IMR-90 (cell line): ENCODE measurements at regions of chr11 and their contacts with region 1.

Region 1: GRCh38 chr11:103326070-103326794 is 217.0 kb downstream of the DYNC2H1 start:
- DNase-seq: peak; percentile 78
- ATAC-seq: peak; percentile 98
- H3K4me3 ChIP-seq: no peak overlapping the region
- H3K27ac ChIP-seq: peak overlapping the region; percentile 34
- H3K4me1 ChIP-seq: peaks cover 4% of the 10 kb centered on the region
- H3K27me3 ChIP-seq: no peaks in the 10 kb centered on the region
- CTCF ChIP-seq: peak; percentile 91
- POLR2A ChIP-seq: no peak
- RAD21 ChIP-seq: peak; percentile 89

Region 2: GRCh38 chr11:103202048-103202651 is 124.1 kb before region 1 on chr11:
- CTCF ChIA-PET with region 1: no interaction called
- POLR2A ChIA-PET with region 1: no interaction called
- dilution Hi-C with region 1: no loop called
- in situ Hi-C with region 1: no loop called
- intact Hi-C with region 1: loop called (anchors 5 kb)
- DNase-seq: peak; percentile 63
- ATAC-seq: peak; percentile 60
- H3K4me3 ChIP-seq: no peak overlapping the region
- H3K27ac ChIP-seq: no peak overlapping the region
- H3K4me1 ChIP-seq: peaks cover 2% of the 10 kb centered on the region; the same call in 1 of the 2 replicates
- H3K27me3 ChIP-seq: no peaks in the 10 kb centered on the region
- CTCF ChIP-seq: peak; percentile 79
- POLR2A ChIP-seq: no peak
- RAD21 ChIP-seq: peak; percentile 74

Region 3: DNA sequence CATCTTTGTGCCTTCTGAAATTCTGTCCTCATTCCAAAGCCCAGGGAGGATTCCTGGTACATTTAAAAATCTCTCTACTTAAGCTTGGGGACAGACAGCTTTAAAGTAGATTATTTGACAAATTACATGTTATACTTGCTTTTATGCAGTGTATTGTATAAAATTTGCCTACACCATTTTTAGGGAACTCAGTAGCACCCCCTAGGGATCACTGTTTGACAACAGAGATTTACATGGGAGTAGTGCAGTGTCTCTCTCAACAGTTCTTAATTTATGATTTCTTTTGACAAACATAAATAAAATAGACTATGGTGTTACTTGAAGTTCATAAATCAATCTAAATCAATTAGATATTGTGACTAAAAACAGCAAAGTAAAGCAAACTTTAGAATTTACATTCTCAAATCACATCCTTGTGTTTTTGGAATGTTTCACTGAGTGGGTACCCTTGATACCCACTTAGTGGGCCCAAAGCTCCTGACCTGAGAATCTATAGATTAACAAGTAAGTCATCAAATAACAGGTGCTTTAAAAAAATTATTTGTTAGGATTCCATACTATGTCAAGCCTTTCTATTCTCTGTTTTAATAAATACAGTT is 211.8 kb after region 1 on chr11:
- CTCF ChIA-PET with region 1: interaction called, 3 read pairs
- POLR2A ChIA-PET with region 1: no interaction called
- dilution Hi-C with region 1: no loop called
- in situ Hi-C with region 1: no loop called
- intact Hi-C with region 1: loop called (anchors 2 kb)
- DNase-seq: peak; percentile 47
- ATAC-seq: peak; percentile 84
- H3K4me3 ChIP-seq: no peak overlapping the region
- H3K27ac ChIP-seq: no peak overlapping the region
- H3K4me1 ChIP-seq: no peaks in the 10 kb centered on the region
- H3K27me3 ChIP-seq: no peaks in the 10 kb centered on the region
- CTCF ChIP-seq: peak; percentile 62
- POLR2A ChIP-seq: no peak
- RAD21 ChIP-seq: peak; percentile 53